GM18951 (cell line): ENCODE measurements at regions of chr3 and their contacts with region 1.

Region 1: GRCh38 chr3:177050501-177051237 is 146.6 kb downstream of the TBL1XR1 start:
- POLR2A ChIP-seq: no peak

Region 2: DNA sequence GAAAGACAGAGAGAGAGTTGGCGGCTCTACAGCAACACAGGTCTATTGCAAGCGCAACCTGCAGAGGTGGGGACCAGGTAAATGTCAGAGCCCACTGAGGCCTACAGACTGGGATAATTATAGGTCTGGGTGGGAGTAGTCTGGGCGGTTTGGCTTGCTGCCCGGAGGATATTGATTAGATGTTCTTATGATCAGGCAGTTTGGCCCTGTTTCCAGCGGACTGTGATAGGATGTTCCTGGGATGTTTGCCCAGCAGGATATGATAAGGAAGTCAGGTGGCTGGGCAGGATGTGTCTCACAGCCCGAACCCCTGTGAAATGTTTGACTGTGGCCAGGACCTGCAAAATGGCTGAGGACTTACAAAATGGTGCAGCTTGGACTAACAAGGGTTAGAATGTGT is 1826.6 kb before region 1 on chr3:
- in situ Hi-C with region 1: no loop called
- POLR2A ChIP-seq: no peak

Region 3: GRCh38 chr3:177249203-177249602 is 198.5 kb after region 1 on chr3:
- in situ Hi-C with region 1: no loop called
- POLR2A ChIP-seq: no peak

Region 4: DNA sequence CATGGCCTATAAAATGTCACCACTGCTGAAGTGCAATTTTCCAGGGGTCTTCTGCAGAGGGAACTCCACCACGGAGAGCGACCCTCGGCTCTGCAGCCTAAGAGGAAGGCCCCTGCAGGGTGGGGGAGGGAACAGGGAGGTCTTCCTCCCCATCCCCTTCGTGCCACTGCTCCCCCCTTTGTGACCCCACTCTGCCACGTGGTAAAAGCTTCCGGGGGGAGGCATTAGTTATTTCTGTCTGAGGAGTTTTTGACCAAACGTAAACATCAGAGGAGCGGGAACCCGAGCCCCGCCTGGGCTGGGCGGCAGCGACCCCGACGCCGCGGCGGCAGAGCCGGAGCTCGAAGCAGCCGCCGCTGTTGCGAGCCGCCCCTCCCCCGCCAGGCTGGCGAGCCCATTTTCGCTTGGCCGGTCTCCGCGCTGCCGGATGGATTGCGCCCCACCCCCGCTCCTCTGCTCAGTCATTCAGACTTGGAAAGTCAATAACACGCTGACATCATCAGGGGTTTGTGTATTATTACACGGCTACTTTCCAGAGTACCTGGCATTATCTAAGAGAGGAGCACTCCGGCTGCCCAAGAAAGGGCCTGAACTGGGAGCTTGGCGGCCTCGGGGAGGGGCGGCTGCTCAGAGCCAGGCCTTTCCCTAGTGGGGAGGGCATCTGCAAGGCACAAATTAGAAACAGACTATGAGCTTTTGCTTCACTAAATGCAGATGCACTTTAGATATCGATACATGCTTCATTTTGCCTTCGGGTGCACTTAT is 309.1 kb after region 1 on chr3:
- in situ Hi-C with region 1: loop called (anchors 10 kb)
- POLR2A ChIP-seq: peak; percentile 42

Region 5: GRCh38 chr3:177753451-177754155 is 702.9 kb after region 1 on chr3:
- in situ Hi-C with region 1: loop called (anchors 25 kb)
- POLR2A ChIP-seq: no peak